ENCODE measurements at regions of chr10 and their contacts with region 1.

Region 1: DNA sequence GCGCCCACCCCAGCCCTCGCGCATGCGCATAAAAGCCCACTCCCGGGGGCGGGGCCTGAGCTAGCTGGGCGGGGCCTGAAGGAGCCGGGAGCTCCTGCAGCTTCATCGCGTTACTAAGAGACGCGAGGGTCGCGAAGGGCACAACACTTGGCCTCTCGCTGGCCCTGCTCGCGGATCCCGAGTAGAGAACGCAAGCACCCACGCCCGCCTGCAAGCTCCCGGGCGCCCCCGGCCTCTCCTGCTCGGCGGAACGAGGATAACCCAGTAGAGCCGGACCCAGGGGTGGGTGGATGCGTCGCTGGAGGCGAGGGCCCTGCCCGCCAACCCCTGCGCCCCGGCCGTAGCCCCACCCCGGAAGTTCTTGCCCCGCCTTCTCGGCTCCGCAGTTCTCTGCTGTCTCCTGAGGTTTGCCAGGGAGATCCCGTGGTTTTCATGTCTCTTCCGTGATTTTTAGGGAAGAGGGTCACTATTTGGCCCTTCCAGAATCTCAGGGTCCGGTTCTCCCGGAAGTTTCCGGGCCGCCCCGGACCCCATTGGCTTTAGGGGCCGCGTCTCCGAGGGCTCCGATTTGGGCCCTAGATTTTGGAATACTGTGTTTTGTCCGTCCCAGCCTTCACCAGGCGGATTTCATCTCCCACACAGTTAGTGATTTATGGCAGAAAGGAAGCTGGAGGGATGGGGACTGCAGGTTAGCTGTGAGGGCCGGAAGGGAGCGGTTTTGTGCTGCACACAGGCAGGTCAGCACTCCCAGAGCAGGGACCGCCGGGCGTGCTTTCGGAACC is at the start of gene MEIG1:
- DNase-seq: peak; percentile 83 to 86
- H3K4me3 ChIP-seq: peak within 1 kb of the TSS; percentile 57 to 77 (median 74)
- H3K27ac ChIP-seq: peak within 1 kb of the TSS; percentile 91 to 92
- H3K4me1 ChIP-seq: no peaks in the 10 kb centered on the region
- H3K27me3 ChIP-seq: no peaks in the 10 kb centered on the region
- CTCF ChIP-seq: peak in 1 of 3 donors; percentile 12
- POLR2A ChIP-seq: peak; percentile 33
- total RNA-seq, gene MEIG1: not detected

Region 2: GRCh38 chr10:14878266-14879054 is 81.0 kb before region 1 on chr10 and contains the start of gene SUV39H2:
- intact Hi-C with region 1: no loop called
- DNase-seq: peak; percentile 94 to 95
- H3K4me3 ChIP-seq: peak within 1 kb of the TSS; percentile 84 to 94 (median 84)
- H3K27ac ChIP-seq: peak within 1 kb of the TSS; percentile 91 to 96
- H3K4me1 ChIP-seq: no peaks in the 10 kb centered on the region
- H3K27me3 ChIP-seq: no peaks in the 10 kb centered on the region
- CTCF ChIP-seq: no peak
- POLR2A ChIP-seq: no peak
- total RNA-seq, gene SUV39H2: 4.6 to 7.5 (median 5.6) TPM

Region 3: DNA sequence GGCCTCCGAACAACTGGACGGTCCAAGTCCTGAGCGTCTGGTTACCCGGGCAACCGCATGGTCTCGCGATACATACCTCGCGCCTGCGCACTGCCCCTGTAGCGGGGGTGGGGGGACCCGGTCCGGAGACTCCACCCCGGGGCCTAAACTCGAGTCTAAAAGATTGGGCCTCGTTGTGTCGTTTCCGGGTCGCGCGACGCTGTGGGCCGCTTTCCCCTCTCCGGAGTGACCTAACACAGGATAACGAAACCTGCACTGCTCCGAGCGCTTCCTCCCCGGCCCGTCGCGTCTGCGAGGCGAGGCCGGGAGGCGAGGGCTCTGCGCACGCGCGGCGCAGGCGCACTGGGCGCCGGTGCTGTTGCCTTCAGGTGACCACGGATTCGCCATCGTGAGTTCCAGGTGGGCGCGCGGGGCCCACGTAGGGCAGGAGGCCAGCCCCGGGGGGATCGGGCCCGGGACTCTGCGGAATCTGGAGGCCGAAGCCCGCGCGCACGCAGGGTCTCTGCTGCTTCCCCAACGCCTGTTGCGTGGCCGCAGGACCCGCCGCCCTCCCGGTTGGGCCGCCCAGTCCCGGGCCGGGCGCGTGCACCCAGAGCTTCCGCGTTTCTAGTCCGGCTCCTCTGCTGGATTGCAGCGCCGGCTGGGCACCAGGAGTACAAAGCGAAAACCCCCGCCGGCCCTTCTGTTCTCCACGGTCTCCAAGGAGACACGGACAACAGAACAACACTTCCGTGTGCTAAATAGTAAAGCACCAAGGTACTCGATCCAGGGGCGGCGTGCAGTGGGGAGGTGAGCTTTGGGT is 137.7 kb after region 1 on chr10 and contains the start of gene RPP38:
- intact Hi-C with region 1: loop called (anchors 10 kb)
- DNase-seq: peak; percentile 94 to 96
- H3K4me3 ChIP-seq: peak within 1 kb of the TSS; percentile 79 to 92 (median 92)
- H3K27ac ChIP-seq: peak within 1 kb of the TSS; percentile 95 to 96
- H3K4me1 ChIP-seq: peaks cover 0 to 9% of the 10 kb centered on the region in 2 donors
- H3K27me3 ChIP-seq: no peaks in the 10 kb centered on the region
- CTCF ChIP-seq: peak in 1 of 3 donors; percentile 6
- POLR2A ChIP-seq: no peak
- total RNA-seq, gene RPP38: 10.6 to 17.4 (median 16.8) TPM

Region 4: DNA sequence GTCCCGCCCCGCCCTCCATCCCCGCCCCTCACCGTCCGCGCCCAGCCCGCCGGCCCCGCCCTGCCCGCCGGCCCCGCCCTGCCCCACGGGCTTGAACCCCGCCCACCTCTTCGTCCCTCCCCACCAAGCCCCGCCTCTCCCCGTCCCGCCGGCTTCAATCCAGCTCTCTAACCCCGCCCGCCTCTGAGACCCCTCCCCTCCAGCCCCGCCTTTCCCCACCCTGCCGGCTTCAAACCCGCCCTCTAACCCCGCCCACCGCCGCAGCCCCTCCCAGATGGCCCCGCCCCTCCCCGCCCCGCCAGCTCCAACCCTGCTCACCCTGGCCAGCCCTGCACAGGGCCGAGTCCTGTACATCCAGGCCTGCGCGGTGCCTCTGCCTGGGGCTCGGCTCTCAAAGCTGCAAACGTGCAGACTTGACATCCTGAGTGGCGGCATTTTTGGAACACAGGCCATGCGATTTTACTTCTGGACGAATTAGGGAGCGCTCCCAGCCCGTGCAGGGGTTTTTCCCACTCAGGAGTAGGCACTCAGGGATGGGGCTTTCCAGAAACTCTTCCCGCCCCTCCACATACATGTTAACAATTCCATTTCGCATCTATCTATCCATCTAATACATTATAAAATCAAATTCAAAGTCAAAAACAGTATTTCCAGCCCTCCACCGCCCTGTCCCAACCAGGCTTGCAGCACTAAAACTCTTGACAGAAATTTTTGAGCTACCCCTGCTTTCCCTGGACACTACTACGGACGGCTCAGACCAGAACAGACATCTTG is 209.5 kb after region 1 on chr10:
- intact Hi-C with region 1: loop called (anchors 5 kb)
- DNase-seq: peak; percentile 90 to 99
- H3K4me3 ChIP-seq: peak overlapping the region in 2 of 3 donors; percentile 51 to 69
- H3K27ac ChIP-seq: peak overlapping the region in 1 of 2 donors; percentile 8
- H3K4me1 ChIP-seq: no peaks in the 10 kb centered on the region
- H3K27me3 ChIP-seq: no peaks in the 10 kb centered on the region
- CTCF ChIP-seq: no peak
- POLR2A ChIP-seq: no peak